ENCODE measurements at regions of chr15 and their contacts with region 1.

Region 1: GRCh38 chr15:65638681-65639089 is 16.9 kb downstream of the SLC24A1 start:
- DNase-seq: peak in 4 of 7 donors; percentile 36 to 59 (median 52)
- H3K4me3 ChIP-seq: peak overlapping the region in 1 of 4 donors; percentile 38
- H3K27ac ChIP-seq: no peak overlapping the region
- H3K4me1 ChIP-seq: peaks cover 0 to 8% of the 10 kb centered on the region in 2 donors
- H3K27me3 ChIP-seq: no peaks in the 10 kb centered on the region
- CTCF ChIP-seq: peak; percentile 78 to 90 (median 82)
- POLR2A ChIP-seq: no peak

Region 2: GRCh38 chr15:65752151-65752700 is 113.5 kb after region 1 on chr15:
- intact Hi-C with region 1: no loop called
- DNase-seq: no peak
- H3K4me3 ChIP-seq: no peak overlapping the region
- H3K27ac ChIP-seq: no peak overlapping the region
- H3K4me1 ChIP-seq: peaks cover 0 to 6% of the 10 kb centered on the region in 2 donors
- H3K27me3 ChIP-seq: no peaks in the 10 kb centered on the region
- CTCF ChIP-seq: no peak
- POLR2A ChIP-seq: no peak

Region 3: GRCh38 chr15:65856821-65857455 is 218.3 kb after region 1 on chr15:
- intact Hi-C with region 1: loop called in 1 of 2 experiments (anchors 5 kb)
- DNase-seq: peak; percentile 60 to 89 (median 72)
- H3K4me3 ChIP-seq: no peak overlapping the region
- H3K27ac ChIP-seq: no peak overlapping the region
- H3K4me1 ChIP-seq: no peaks in the 10 kb centered on the region
- H3K27me3 ChIP-seq: no peaks in the 10 kb centered on the region
- CTCF ChIP-seq: peak; percentile 59 to 83 (median 78)
- POLR2A ChIP-seq: no peak

Measured in adrenal gland (tissue), 19 donors.